ENCODE measurements at regions of chr5 and their contacts with region 1.

Region 1: DNA sequence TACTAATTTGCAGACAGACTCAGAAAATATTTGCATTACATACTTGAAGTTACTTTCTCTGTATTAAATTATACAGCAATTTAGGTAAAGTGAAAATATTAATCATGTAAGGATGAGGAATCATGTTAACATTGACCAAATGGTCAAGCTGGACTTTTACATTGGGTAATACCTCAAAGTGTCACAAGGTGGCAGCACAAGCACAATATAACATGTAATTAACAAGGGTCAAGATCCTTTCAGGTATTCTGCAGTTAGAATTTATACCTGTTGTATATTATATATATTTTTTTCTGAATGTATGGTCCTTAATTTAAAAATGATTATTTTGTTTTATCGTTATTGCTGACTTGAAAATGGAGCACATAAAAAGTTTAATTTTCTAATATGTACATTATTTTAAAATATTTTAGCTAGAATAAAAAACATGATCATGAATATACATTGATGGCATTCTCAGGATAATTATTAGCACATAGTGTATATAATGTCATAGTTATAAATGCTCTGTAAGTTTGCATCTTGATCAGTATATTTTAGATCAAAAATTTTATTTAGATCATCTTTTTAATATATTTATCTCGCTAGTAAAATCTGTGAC is 8.6 kb downstream of the HAPLN1 start:
- DNase-seq: peak; percentile 39
- H3K4me3 ChIP-seq: no peak overlapping the region; a peak in 1 of 4 replicates
- H3K27ac ChIP-seq: no peak overlapping the region
- H3K4me1 ChIP-seq: peaks cover 0 to 3% of the 10 kb centered on the region in 2 experiments; a peak in 1 of 4 replicates
- H3K27me3 ChIP-seq: peaks cover 5% of the 10 kb centered on the region; the same call in 1 of the 2 replicates
- CTCF ChIP-seq: peak; percentile 78
- EP300 ChIP-seq: no peak
- RAD21 ChIP-seq: peak; percentile 76

Region 2: DNA sequence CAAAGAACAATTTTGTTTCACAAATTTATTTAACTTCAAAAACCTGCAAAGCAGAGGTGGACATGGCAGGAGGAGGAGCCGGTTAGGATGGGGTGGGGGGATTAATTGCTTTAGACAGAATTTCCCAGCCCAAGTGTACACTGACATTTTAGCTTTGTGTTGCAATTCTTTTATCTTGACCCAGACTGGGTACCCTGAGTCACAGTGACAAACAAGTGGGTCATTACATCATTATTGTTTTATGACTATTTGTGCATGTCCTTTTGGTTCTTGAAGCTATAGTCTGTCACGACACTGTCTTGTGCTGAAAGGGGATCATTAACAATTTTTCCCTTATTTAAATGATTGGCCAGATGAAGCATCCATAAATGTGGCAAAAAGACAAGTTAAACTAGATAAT is 325.1 kb before region 1 on chr5:
- CTCF ChIA-PET with region 1: no interaction called
- POLR2A ChIA-PET with region 1: no interaction called
- DNase-seq: no peak
- H3K4me3 ChIP-seq: no peak overlapping the region
- H3K27ac ChIP-seq: no peak overlapping the region
- H3K4me1 ChIP-seq: no peaks in the 10 kb centered on the region; a peak in 1 of 4 replicates
- H3K27me3 ChIP-seq: no peaks in the 10 kb centered on the region
- CTCF ChIP-seq: no peak
- EP300 ChIP-seq: no peak
- RAD21 ChIP-seq: no peak

Region 3: DNA sequence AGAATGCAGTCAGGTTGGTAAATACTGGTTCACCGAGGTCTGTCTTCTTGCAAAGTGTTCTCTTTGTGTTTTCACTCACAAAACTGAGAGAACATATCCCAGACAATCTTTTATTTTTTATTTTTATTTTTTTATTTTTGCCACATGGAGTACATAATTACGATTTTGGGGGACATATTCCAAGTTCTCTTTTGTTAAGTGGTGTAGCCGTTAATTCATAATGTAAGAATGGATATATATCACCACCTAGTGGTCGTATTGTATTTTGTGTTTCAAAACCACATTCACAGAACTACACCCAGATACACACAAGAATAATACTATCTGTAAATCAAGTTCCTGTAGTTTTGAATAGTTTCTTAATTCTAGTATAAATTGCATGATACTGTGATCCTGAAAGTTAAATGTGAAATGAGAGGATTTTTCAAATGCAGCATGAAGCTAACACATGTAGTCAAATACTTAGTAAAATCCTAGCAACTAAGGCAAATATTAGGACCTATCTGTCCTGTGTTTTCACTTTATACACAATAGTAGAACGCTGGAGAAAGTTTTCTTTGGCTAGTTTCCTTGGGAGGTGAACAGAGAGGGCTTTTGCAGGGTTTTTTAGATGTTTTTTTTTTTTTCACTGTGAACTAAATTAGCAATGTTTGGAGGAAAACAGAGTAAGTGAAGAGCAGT is 147.9 kb before region 1 on chr5:
- CTCF ChIA-PET with region 1: no interaction called
- POLR2A ChIA-PET with region 1: no interaction called
- DNase-seq: peak; percentile 13
- H3K4me3 ChIP-seq: no peak overlapping the region; a peak in 1 of 4 replicates
- H3K27ac ChIP-seq: peak overlapping the region; percentile 14 to 16; a peak in 1 of 4 replicates
- H3K4me1 ChIP-seq: peaks cover 10 to 12% of the 10 kb centered on the region in 2 experiments; a peak in 3 of 4 replicates
- H3K27me3 ChIP-seq: no peaks in the 10 kb centered on the region
- CTCF ChIP-seq: peak; percentile 78
- EP300 ChIP-seq: no peak
- RAD21 ChIP-seq: peak; percentile 83

Region 4: GRCh38 chr5:83628360-83628759 is 83.7 kb before region 1 on chr5:
- CTCF ChIA-PET with region 1: no interaction called
- POLR2A ChIA-PET with region 1: no interaction called
- DNase-seq: no peak
- H3K4me3 ChIP-seq: no peak overlapping the region
- H3K27ac ChIP-seq: peak overlapping the region in 1 of 2 experiments; percentile 75; a peak in 1 of 4 replicates
- H3K4me1 ChIP-seq: no peaks in the 10 kb centered on the region; a peak in 1 of 4 replicates
- H3K27me3 ChIP-seq: peaks cover 6% of the 10 kb centered on the region; the same call in 1 of the 2 replicates
- CTCF ChIP-seq: no peak
- EP300 ChIP-seq: no peak
- RAD21 ChIP-seq: no peak

Region 5: DNA sequence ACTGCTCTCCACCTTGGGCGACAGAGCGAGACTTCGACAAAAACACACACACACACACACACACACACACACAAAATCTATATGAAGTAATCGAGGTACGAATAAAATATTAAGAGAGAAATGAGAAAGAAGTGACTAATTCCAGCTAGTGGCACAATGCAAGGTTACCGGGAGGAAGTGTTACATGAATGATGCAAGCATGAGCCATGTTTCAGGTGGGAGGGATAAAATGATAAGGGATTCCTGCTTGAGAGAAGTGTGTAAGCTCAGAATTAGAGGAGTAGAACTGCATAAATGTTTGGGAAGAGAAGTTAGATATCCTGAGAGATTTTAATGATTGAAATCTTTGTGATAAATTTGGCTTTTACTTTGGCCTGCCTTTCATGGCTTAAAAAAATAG is 10.2 kb before region 1 on chr5:
- CTCF ChIA-PET with region 1: interaction called, 15 read pairs
- POLR2A ChIA-PET with region 1: no interaction called
- DNase-seq: no peak
- H3K4me3 ChIP-seq: no peak overlapping the region
- H3K27ac ChIP-seq: no peak overlapping the region
- H3K4me1 ChIP-seq: no peaks in the 10 kb centered on the region
- H3K27me3 ChIP-seq: no peaks in the 10 kb centered on the region
- CTCF ChIP-seq: no peak
- EP300 ChIP-seq: no peak
- RAD21 ChIP-seq: no peak

Region 6: GRCh38 chr5:83721953-83722901 is 10.1 kb after region 1 on chr5:
- CTCF ChIA-PET with region 1: interaction called, 21 read pairs
- POLR2A ChIA-PET with region 1: no interaction called
- DNase-seq: peak; percentile 85
- H3K4me3 ChIP-seq: peak overlapping the region; percentile 62 to 65
- H3K27ac ChIP-seq: peak overlapping the region; percentile 47 to 76
- H3K4me1 ChIP-seq: peaks cover 9 to 15% of the 10 kb centered on the region in 2 experiments; a peak in 3 of 4 replicates
- H3K27me3 ChIP-seq: no peaks in the 10 kb centered on the region
- CTCF ChIP-seq: peak; percentile 74
- EP300 ChIP-seq: no peak
- RAD21 ChIP-seq: peak; percentile 80

Region 7: GRCh38 chr5:83750749-83751148 is 38.6 kb after region 1 on chr5:
- CTCF ChIA-PET with region 1: no interaction called
- POLR2A ChIA-PET with region 1: no interaction called
- DNase-seq: no peak
- H3K4me3 ChIP-seq: no peak overlapping the region
- H3K27ac ChIP-seq: no peak overlapping the region
- H3K4me1 ChIP-seq: no peaks in the 10 kb centered on the region; a peak in 1 of 4 replicates
- H3K27me3 ChIP-seq: no peaks in the 10 kb centered on the region
- CTCF ChIP-seq: no peak
- EP300 ChIP-seq: no peak
- RAD21 ChIP-seq: no peak